ENCODE measurements at regions of chr5 and their contacts with region 1.

Region 1: DNA sequence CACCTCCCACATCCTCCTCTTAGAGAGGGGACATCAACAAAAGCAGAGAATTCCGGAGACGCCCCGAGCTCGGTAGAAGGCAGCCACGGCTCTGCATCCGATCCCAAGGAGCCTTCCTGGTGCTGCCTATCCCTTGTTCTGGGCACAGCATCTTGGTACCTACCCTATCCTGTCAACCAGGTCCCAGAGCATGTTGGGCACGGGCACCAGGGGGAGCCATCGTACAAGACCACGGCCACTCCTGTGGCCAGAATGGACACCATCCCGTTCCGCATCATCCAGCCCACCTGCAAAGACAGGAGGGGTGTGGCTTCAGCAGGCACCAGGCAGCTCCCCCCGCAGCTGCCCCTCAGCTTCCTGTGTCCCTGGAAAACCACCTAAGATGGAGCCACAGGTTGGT is 62.7 kb upstream of the ZNF354A start:
- DNase-seq: peak; percentile 36
- H3K4me3 ChIP-seq: no peak overlapping the region
- H3K27ac ChIP-seq: no peak overlapping the region
- H3K4me1 ChIP-seq: no peaks in the 10 kb centered on the region
- H3K27me3 ChIP-seq: no peaks in the 10 kb centered on the region
- CTCF ChIP-seq: peak in 1 of 2 donors; percentile 59

Region 2: GRCh38 chr5:178838695-178839685 is 45.8 kb after region 1 on chr5:
- CTCF ChIA-PET with region 1: no interaction called
- dilution Hi-C with region 1: loop called (anchors 10 kb)
- in situ Hi-C with region 1: no loop called
- intact Hi-C with region 1: loop called (anchors 1 kb)
- DNase-seq: peak; percentile 46
- H3K4me3 ChIP-seq: no peak overlapping the region
- H3K27ac ChIP-seq: no peak overlapping the region
- H3K4me1 ChIP-seq: no peaks in the 10 kb centered on the region
- H3K27me3 ChIP-seq: no peaks in the 10 kb centered on the region
- CTCF ChIP-seq: peak; percentile 42 to 80